ENCODE measurements at regions of chr3 and their contacts with region 1.

Region 1: GRCh38 chr3:99970198-99970597 is 144.1 kb downstream of the FILIP1L start:
- DNase-seq: no peak
- H3K4me3 Mint-ChIP-seq: no peak overlapping the region
- H3K27ac Mint-ChIP-seq: peak overlapping the region; percentile 33
- H3K4me1 Mint-ChIP-seq: peaks cover 37% of the 10 kb centered on the region
- H3K27me3 Mint-ChIP-seq: no peaks in the 10 kb centered on the region

Region 2: GRCh38 chr3:99856437-99857220 is 113.6 kb before region 1 on chr3:
- intact Hi-C with region 1: loop called (anchors 1 kb)
- DNase-seq: no peak
- H3K4me3 Mint-ChIP-seq: no peak overlapping the region
- H3K27ac Mint-ChIP-seq: peak overlapping the region; percentile 89
- H3K4me1 Mint-ChIP-seq: peaks cover 70% of the 10 kb centered on the region
- H3K27me3 Mint-ChIP-seq: no peaks in the 10 kb centered on the region

Region 3: DNA sequence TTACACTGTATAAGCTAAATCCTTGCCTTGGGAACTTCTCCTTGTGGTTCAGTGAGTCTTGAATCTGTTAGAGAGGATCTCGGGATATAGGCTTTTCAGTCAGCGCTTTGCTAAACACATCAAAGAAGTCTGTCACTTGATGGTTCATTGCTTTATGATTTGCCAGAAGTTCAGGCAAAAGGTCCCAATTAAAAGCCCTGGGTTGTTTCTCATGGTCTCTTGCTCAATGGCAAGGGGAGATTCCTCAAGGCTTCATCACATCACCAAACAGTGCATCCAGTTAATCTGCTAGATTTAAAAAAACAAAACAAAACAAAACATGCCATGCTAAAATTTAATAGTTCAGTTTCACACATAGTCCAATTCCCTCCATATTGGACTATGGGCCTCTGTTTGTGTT is 29.3 kb after region 1 on chr3:
- intact Hi-C with region 1: no loop called
- DNase-seq: no peak
- H3K4me3 Mint-ChIP-seq: no peak overlapping the region
- H3K27ac Mint-ChIP-seq: no peak overlapping the region
- H3K4me1 Mint-ChIP-seq: peaks cover 21% of the 10 kb centered on the region
- H3K27me3 Mint-ChIP-seq: no peaks in the 10 kb centered on the region

Region 4: GRCh38 chr3:100030346-100030745 is 60.1 kb after region 1 on chr3:
- intact Hi-C with region 1: loop called (anchors 2 kb)
- DNase-seq: no peak
- H3K4me3 Mint-ChIP-seq: no peak overlapping the region
- H3K27ac Mint-ChIP-seq: no peak overlapping the region
- H3K4me1 Mint-ChIP-seq: peaks cover 18% of the 10 kb centered on the region
- H3K27me3 Mint-ChIP-seq: no peaks in the 10 kb centered on the region

Measured in activated T-helper 2 cell treated with anti-CD3 and anti-CD28 coated beads, Interferon-gamma antibody, Interleukin-2, Interleukin-4, amounts not matched to agents 10 μg/mL and 5 μg/mL and 100 μg/mL, durations not matched to agents 14 hours and 24 hours and 36 hours (primary cell).